ENCODE measurements at regions of chr3 and their contacts with region 1.

Region 1: DNA sequence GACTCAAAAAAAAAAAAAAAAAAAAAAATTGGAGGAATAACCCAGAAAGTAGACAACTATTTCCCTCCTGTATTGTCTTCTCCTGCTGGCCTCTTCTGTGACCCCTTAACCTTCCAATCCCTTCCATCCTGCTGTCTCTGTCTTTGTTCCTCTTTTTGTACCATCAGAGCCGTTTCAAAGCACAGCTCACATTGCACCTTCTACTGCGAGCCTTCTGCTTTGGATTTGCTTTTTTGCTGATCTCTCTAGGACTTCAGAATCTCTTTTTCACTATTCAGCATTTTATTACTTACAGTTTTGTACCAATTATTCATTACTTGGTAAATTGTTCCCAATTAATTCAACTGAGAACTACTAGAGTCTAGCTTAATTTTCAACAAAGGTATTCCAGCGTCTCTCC is 284.0 kb upstream of the TBL1XR1 start:
- DNase-seq: no peak
- H3K4me3 ChIP-seq: no peak overlapping the region
- H3K4me3 Mint-ChIP-seq: no peak overlapping the region
- H3K27ac ChIP-seq: no peak overlapping the region
- H3K27ac Mint-ChIP-seq: peak overlapping the region in 1 of 8 donors; percentile 47
- H3K4me1 ChIP-seq: no peaks in the 10 kb centered on the region
- H3K4me1 Mint-ChIP-seq: peaks cover 0 to 9% (median 3%) of the 10 kb centered on the region in 3 donors
- H3K27me3 ChIP-seq: no peaks in the 10 kb centered on the region
- H3K27me3 Mint-ChIP-seq: no peaks in the 10 kb centered on the region

Region 2: GRCh38 chr3:177069514-177070329 is 411.6 kb before region 1 on chr3:
- CTCF ChIA-PET with region 1: no interaction called
- POLR2A ChIA-PET with region 1: no interaction called
- DNase-seq: no peak
- H3K4me3 ChIP-seq: no peak overlapping the region
- H3K4me3 Mint-ChIP-seq: no peak overlapping the region
- H3K27ac ChIP-seq: no peak overlapping the region
- H3K27ac Mint-ChIP-seq: peak overlapping the region in 3 of 8 donors; percentile 9 to 80 (median 35)
- H3K4me1 ChIP-seq: peaks cover 20% of the 10 kb centered on the region
- H3K4me1 Mint-ChIP-seq: peaks cover 64 to 87% (median 82%) of the 10 kb centered on the region in 3 donors
- H3K27me3 ChIP-seq: no peaks in the 10 kb centered on the region
- H3K27me3 Mint-ChIP-seq: no peaks in the 10 kb centered on the region

Region 3: GRCh38 chr3:177410730-177411129 is 70.6 kb before region 1 on chr3:
- CTCF ChIA-PET with region 1: no interaction called
- POLR2A ChIA-PET with region 1: no interaction called
- DNase-seq: peak in 1 of 5 donors; percentile 6
- H3K4me3 ChIP-seq: no peak overlapping the region
- H3K4me3 Mint-ChIP-seq: no peak overlapping the region
- H3K27ac ChIP-seq: no peak overlapping the region
- H3K27ac Mint-ChIP-seq: peak overlapping the region in 1 of 8 donors; percentile 87
- H3K4me1 ChIP-seq: peaks cover 10% of the 10 kb centered on the region
- H3K4me1 Mint-ChIP-seq: peaks cover 9 to 11% (median 11%) of the 10 kb centered on the region in 3 donors
- H3K27me3 ChIP-seq: no peaks in the 10 kb centered on the region
- H3K27me3 Mint-ChIP-seq: no peaks in the 10 kb centered on the region

Region 4: DNA sequence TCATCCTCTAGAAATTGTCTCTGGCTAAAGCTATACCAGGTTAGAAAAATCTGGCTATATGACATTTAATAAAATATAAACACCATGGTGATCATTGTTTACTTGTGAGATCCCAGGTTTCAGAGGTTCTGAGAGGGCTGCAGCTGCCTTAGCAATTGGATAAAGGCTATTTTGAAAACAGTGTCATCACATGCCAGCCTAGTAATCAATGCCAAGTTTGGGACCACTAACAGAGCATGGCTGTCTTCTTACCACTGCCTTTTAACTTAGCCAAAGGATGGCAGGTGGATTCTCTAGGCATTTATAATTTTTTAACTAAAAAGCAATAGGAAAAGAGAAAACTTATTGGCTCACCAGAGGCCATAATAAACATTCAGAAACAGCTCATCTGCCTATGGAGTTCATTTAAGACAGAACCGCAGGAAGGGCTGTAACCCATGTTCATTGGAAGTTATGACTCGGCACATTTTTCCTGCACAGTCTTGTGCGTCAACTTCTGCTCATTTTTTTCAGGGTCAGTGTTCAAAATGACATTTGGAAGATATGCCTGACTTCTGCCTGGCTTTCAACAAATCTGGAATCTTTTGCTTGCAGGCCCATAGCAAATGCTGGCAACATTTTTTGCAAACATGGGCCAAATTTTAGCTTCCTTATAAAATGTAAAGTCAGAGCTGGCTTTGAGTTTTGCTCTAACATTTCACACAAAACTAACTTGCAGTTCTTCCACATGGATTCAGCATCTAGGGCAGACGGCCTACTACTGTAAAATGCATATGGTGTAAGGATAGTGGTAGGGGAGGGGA is 192.0 kb after region 1 on chr3:
- CTCF ChIA-PET with region 1: no interaction called
- POLR2A ChIA-PET with region 1: interaction called, 15 read pairs
- DNase-seq: no peak
- H3K4me3 ChIP-seq: no peak overlapping the region
- H3K4me3 Mint-ChIP-seq: no peak overlapping the region
- H3K27ac ChIP-seq: no peak overlapping the region
- H3K27ac Mint-ChIP-seq: no peak overlapping the region
- H3K4me1 ChIP-seq: no peaks in the 10 kb centered on the region
- H3K4me1 Mint-ChIP-seq: peaks cover 0 to 8% (median 3%) of the 10 kb centered on the region in 3 donors
- H3K27me3 ChIP-seq: no peaks in the 10 kb centered on the region
- H3K27me3 Mint-ChIP-seq: no peaks in the 10 kb centered on the region

Measured in CD8-positive, alpha-beta memory T cell (primary cell).